ENCODE measurements at regions of chr19 and their contacts with region 1.

Region 1: GRCh38 chr19:2950286-2951124 is 5.7 kb upstream of the ZNF77 start:
- DNase-seq: peak; percentile 100
- ATAC-seq: peak; percentile 93 to 97
- H3K4me3 ChIP-seq: peak overlapping the region; percentile 72
- H3K27ac ChIP-seq: peak overlapping the region; percentile 95
- H3K4me1 ChIP-seq: peaks cover 6% of the 10 kb centered on the region
- H3K27me3 ChIP-seq: no peaks in the 10 kb centered on the region

Region 2: GRCh38 chr19:3075895-3076431 is 125.5 kb after region 1 on chr19:
- intact Hi-C with region 1: loop called in 2 of 4 experiments (anchors 10 kb)
- DNase-seq: peak; percentile 44 to 84 (median 83)
- ATAC-seq: peak; percentile 59 to 67
- H3K4me3 ChIP-seq: no peak overlapping the region
- H3K27ac ChIP-seq: no peak overlapping the region
- H3K4me1 ChIP-seq: no peaks in the 10 kb centered on the region
- H3K27me3 ChIP-seq: no peaks in the 10 kb centered on the region

Region 3: GRCh38 chr19:3154957-3155736 is 204.6 kb after region 1 on chr19:
- intact Hi-C with region 1: loop called in 3 of 4 experiments (anchors 5 to 10 kb)
- DNase-seq: peak; percentile 78 to 87 (median 82)
- ATAC-seq: peak; percentile 76 to 96
- H3K4me3 ChIP-seq: no peak overlapping the region
- H3K27ac ChIP-seq: peak overlapping the region; percentile 68
- H3K4me1 ChIP-seq: no peaks in the 10 kb centered on the region
- H3K27me3 ChIP-seq: no peaks in the 10 kb centered on the region